Natural killer cell (primary cell): ENCODE measurements at regions of chr7 and their contacts with region 1.

Region 1: DNA sequence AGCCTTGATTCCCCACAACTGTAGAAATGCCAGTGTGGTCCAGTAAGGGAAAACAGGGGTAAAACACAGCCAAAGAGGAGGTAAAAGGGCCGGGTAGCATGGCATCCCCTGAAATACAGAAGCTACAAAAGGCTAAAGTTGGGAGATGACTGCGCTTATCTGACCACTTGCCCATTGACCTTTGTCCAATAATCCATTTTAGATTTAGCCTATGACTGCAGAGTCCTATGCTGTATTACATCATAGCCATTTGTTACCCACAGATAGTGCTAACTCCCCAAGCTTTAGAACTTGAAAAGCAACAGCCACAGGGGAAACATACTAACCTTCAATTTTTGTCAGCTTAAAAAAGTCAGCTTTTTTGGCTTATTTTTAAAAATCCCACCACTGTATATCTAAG is 26.2 kb downstream of the MTPN start:
- DNase-seq: no peak
- ATAC-seq: peak in 1 of 3 donors; percentile 33
- H3K4me3 ChIP-seq: no peak overlapping the region
- H3K4me3 Mint-ChIP-seq: peak overlapping the region; percentile 49
- H3K27ac ChIP-seq: no peak overlapping the region
- H3K27ac Mint-ChIP-seq: peak overlapping the region; percentile 65 to 72
- H3K4me1 ChIP-seq: peaks cover 4% of the 10 kb centered on the region
- H3K4me1 Mint-ChIP-seq: peaks cover 75 to 80% of the 10 kb centered on the region in 2 donors
- H3K27me3 ChIP-seq: no peaks in the 10 kb centered on the region
- H3K27me3 Mint-ChIP-seq: no peaks in the 10 kb centered on the region
- CTCF ChIP-seq: no peak

Region 2: DNA sequence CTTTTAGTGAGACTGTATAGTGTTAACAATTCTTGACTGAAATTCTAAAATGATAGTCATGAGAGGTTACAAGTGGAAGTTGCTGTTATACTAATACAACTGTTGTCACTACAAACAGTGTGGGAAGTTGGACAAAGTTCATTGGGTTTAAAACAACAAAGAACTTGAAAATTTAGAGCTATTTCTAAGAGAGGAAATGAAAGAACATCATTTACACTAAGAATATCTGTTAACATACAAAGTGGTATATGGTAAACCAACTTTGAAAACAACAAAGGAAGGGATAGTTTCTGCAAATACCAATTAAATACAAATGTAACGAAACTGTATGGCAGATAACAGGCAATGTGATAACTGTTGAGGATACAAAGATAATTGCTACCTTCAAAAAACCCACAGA is 14.6 kb after region 1 on chr7:
- intact Hi-C with region 1: loop called (anchors 2 kb)
- DNase-seq: no peak
- ATAC-seq: no peak
- H3K4me3 ChIP-seq: no peak overlapping the region
- H3K4me3 Mint-ChIP-seq: peak overlapping the region; percentile 18
- H3K27ac ChIP-seq: no peak overlapping the region
- H3K27ac Mint-ChIP-seq: peak overlapping the region; percentile 43 to 47
- H3K4me1 ChIP-seq: peaks cover 4% of the 10 kb centered on the region
- H3K4me1 Mint-ChIP-seq: peaks cover 79 to 84% of the 10 kb centered on the region in 2 donors
- H3K27me3 ChIP-seq: no peaks in the 10 kb centered on the region
- H3K27me3 Mint-ChIP-seq: no peaks in the 10 kb centered on the region
- CTCF ChIP-seq: no peak